ENCODE measurements at regions of chr6 and their contacts with region 1.

Region 1: DNA sequence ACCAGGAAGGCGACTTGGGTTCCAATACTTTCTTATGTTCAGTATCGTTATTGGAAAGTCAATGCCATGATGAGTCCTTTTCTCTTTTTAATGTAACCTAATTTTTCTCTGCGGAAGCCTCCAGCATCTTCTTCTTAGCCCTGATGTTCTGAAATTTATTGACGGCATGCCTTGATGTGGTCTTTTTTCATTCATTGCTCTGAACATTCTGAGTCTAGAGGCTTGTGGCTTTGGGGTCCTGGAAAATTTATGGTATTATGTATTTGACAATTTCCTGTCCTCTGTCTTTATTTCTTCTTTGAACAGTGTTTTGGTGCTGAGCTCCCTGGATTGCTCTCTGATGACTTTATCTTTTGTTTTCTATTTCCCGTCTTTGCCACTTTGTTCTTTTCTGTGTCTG is 28.7 kb upstream of the MAS1 start:
- DNase-seq: no peak
- ATAC-seq: no peak
- H3K4me3 ChIP-seq: no peak overlapping the region
- H3K27ac ChIP-seq: no peak overlapping the region
- H3K4me1 ChIP-seq: no peaks in the 10 kb centered on the region
- H3K27me3 ChIP-seq: no peaks in the 10 kb centered on the region
- CTCF ChIP-seq: no peak
- POLR2A ChIP-seq: no peak

Region 2: GRCh38 chr6:159829526-159829925 is 32.6 kb before region 1 on chr6:
- intact Hi-C with region 1: no loop called
- DNase-seq: no peak
- ATAC-seq: no peak
- H3K4me3 ChIP-seq: no peak overlapping the region
- H3K27ac ChIP-seq: peak overlapping the region in 1 of 12 donors; percentile 32
- H3K4me1 ChIP-seq: peaks cover 0 to 13% (median 2%) of the 10 kb centered on the region in 12 donors
- H3K27me3 ChIP-seq: no peaks in the 10 kb centered on the region
- CTCF ChIP-seq: no peak
- POLR2A ChIP-seq: no peak

Region 3: GRCh38 chr6:159842035-159842434 is 20.1 kb before region 1 on chr6:
- intact Hi-C with region 1: no loop called
- DNase-seq: no peak
- ATAC-seq: no peak
- H3K4me3 ChIP-seq: no peak overlapping the region
- H3K27ac ChIP-seq: no peak overlapping the region
- H3K4me1 ChIP-seq: peaks cover 0 to 3% (median 0%) of the 10 kb centered on the region in 12 donors
- H3K27me3 ChIP-seq: no peaks in the 10 kb centered on the region
- CTCF ChIP-seq: peak in 2 of 12 donors; percentile 10 to 20
- POLR2A ChIP-seq: no peak

Region 4: DNA sequence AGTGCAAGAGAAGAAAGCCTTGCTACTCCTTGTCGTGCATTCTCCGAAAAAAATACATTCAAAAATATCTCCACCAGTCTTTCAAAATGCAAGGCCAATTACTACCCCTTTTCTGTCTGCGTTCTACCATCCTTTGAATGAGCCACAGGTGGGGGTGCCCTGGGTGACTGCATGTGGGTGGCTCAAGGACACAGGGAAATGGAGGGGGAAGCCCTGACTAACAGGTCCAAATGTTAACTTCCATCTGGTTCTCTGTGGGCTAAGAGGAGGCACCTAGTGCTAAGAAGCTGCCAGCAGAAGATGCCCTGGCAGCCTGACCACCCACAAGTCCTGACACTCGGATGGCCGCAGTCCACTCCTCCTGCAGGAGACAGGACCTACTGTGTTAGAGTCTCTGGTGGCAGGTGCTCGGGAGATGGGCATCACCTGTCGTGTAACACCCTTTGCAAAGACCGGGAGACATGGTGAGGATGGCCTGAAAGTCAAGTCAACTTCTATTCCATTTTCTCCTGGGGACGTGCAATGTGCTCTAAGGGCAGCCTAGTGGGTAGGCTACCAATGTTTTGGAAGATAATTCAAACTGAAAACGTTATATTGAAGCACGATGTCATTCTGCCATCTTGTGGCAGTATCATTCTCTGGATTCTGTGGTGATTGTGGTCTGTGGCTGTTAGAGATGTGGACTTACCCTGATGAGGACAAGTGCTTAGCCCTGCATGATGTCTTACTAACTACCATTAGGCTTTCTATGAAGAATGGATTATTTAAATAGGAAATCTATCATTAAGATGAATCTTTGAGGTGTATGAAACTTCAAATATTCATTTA is 79.4 kb after region 1 on chr6:
- intact Hi-C with region 1: loop called (anchors 2 to 5 kb)
- DNase-seq: no peak
- ATAC-seq: peak in 3 of 4 donors; percentile 19 to 51 (median 47)
- H3K4me3 ChIP-seq: no peak overlapping the region
- H3K27ac ChIP-seq: no peak overlapping the region
- H3K4me1 ChIP-seq: peaks cover 0 to 26% (median 7%) of the 10 kb centered on the region in 12 donors
- H3K27me3 ChIP-seq: no peaks in the 10 kb centered on the region
- CTCF ChIP-seq: peak; percentile 26 to 65 (median 48)
- POLR2A ChIP-seq: no peak

Region 5: GRCh38 chr6:160088069-160088783 is 226.1 kb after region 1 on chr6:
- intact Hi-C with region 1: loop called in 3 of 10 experiments (anchors 5 to 10 kb)
- DNase-seq: peak in 4 of 5 donors; percentile 40 to 68 (median 51)
- ATAC-seq: peak; percentile 40 to 81 (median 52)
- H3K4me3 ChIP-seq: no peak overlapping the region
- H3K27ac ChIP-seq: peak overlapping the region in 1 of 12 donors; percentile 28
- H3K4me1 ChIP-seq: peaks cover 0 to 6% (median 0%) of the 10 kb centered on the region in 12 donors
- H3K27me3 ChIP-seq: no peaks in the 10 kb centered on the region
- CTCF ChIP-seq: peak; percentile 36 to 73 (median 56)
- POLR2A ChIP-seq: no peak

Region 6: DNA sequence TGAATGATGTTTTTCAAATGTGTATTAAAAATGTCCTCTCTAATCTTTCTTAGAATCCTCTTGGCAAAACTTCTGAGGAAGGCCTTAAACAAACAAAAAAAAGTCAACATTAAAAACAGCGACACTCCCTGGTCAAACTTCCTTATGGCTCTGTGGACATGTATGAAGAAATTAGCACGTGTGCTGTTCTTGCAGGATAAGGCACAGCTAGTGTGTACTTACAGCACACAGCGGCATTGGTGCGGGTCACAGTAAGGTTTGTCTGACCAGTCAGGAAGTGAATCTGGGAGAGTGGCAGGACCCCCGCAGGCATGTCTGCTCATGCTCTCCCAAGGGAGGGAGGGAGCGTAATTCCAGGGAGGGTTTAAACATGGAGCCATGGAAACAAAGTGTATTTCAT is 298.3 kb after region 1 on chr6:
- intact Hi-C with region 1: no loop called
- DNase-seq: no peak
- ATAC-seq: no peak
- H3K4me3 ChIP-seq: no peak overlapping the region
- H3K27ac ChIP-seq: no peak overlapping the region
- H3K4me1 ChIP-seq: peaks cover 0 to 4% (median 0%) of the 10 kb centered on the region in 12 donors
- H3K27me3 ChIP-seq: no peaks in the 10 kb centered on the region
- CTCF ChIP-seq: no peak
- POLR2A ChIP-seq: no peak

Region 7: GRCh38 chr6:160455541-160456213 is 593.6 kb after region 1 on chr6:
- intact Hi-C with region 1: loop called in 9 of 10 experiments (anchors 2 to 10 kb)
- DNase-seq: peak; percentile 33 to 76 (median 45)
- ATAC-seq: peak; percentile 69 to 90 (median 86)
- H3K4me3 ChIP-seq: peak overlapping the region in 8 of 12 donors; percentile 11 to 41 (median 23)
- H3K27ac ChIP-seq: peak overlapping the region; percentile 4 to 68 (median 31)
- H3K4me1 ChIP-seq: peaks cover 0 to 23% (median 1%) of the 10 kb centered on the region in 12 donors
- H3K27me3 ChIP-seq: peaks cover 0 to 8% (median 0%) of the 10 kb centered on the region in 9 donors
- CTCF ChIP-seq: peak; percentile 86 to 99 (median 97)
- POLR2A ChIP-seq: no peak